Activated T-helper 1 cell treated with anti-CD3 and anti-CD28 coated beads, Interleukin-12 subunit alpha, Interleukin-12 subunit beta, Interleukin-2, Interleukin-4 antibody, amounts not matched to agents 30 ng/mL and 10 ng/mL and 1 ng/mL, durations not matched to agents 14 hours and 24 hours and 36 hours (primary cell): ENCODE measurements at regions of chr12 and their contacts with region 1.

Region 1: GRCh38 chr12:89040146-89040964 is 311.9 kb downstream of the DUSP6 start:
- DNase-seq: peak; percentile 79
- H3K4me3 Mint-ChIP-seq: peak overlapping the region; percentile 61
- H3K27ac Mint-ChIP-seq: peak overlapping the region; percentile 95
- H3K4me1 Mint-ChIP-seq: peaks cover 65% of the 10 kb centered on the region
- H3K27me3 Mint-ChIP-seq: no peaks in the 10 kb centered on the region

Region 2: GRCh38 chr12:88870000-88870737 is 170.2 kb before region 1 on chr12:
- intact Hi-C with region 1: no loop called
- DNase-seq: no peak
- H3K4me3 Mint-ChIP-seq: no peak overlapping the region
- H3K27ac Mint-ChIP-seq: no peak overlapping the region
- H3K4me1 Mint-ChIP-seq: no peaks in the 10 kb centered on the region
- H3K27me3 Mint-ChIP-seq: no peaks in the 10 kb centered on the region

Region 3: GRCh38 chr12:89051065-89051677 is 10.8 kb after region 1 on chr12:
- intact Hi-C with region 1: loop called (anchors 1 kb)
- DNase-seq: no peak
- H3K4me3 Mint-ChIP-seq: no peak overlapping the region
- H3K27ac Mint-ChIP-seq: no peak overlapping the region
- H3K4me1 Mint-ChIP-seq: peaks cover 31% of the 10 kb centered on the region
- H3K27me3 Mint-ChIP-seq: no peaks in the 10 kb centered on the region

Region 4: GRCh38 chr12:89179983-89180382 is 139.6 kb after region 1 on chr12:
- intact Hi-C with region 1: loop called (anchors 1 kb)
- DNase-seq: no peak
- H3K4me3 Mint-ChIP-seq: peak overlapping the region; percentile 48
- H3K27ac Mint-ChIP-seq: peak overlapping the region; percentile 95
- H3K4me1 Mint-ChIP-seq: peaks cover 62% of the 10 kb centered on the region
- H3K27me3 Mint-ChIP-seq: no peaks in the 10 kb centered on the region

Region 5: DNA sequence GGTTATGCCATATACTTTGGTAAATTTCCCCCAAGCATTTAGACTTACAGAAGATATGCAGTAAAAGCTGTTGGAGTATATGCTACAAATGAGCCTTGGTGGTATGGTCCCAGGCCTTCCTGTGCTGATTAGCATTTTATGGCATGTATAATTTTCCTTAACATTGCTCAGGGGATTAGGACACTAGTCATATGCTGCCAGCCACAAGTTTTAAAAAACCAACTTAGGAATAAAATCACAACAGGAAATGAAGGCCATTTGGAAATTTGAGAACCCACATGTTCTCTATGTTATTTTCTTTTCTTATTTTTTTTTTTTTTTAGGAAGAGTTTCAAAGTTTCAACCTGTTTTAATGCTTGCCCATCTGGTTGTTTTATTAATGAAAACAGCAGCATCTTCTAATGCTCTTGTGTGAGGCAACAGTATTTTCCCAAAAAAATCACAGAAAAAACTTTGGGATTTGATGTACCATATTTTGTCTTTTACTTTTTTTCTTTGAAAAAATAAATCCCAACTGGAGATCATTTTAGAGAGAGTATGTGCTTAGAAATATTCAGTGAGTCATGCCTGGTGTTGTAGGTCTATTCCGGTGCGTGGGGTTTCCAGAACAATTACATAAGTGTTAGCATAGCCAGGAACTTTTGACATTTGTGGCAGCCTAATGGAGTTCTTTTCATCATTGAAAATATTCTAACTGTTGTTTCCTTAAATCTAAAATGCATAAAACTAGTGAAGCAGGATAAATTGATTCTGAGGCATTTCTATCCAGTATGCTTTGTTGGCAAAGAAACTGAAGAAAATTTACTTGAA is 333.6 kb after region 1 on chr12:
- intact Hi-C with region 1: loop called (anchors 1 kb)
- DNase-seq: no peak
- H3K4me3 Mint-ChIP-seq: no peak overlapping the region
- H3K27ac Mint-ChIP-seq: no peak overlapping the region
- H3K4me1 Mint-ChIP-seq: peaks cover 50% of the 10 kb centered on the region
- H3K27me3 Mint-ChIP-seq: no peaks in the 10 kb centered on the region

Region 6: GRCh38 chr12:89524541-89525285 is 484.4 kb after region 1 on chr12 and contains the start of gene GALNT4:
- intact Hi-C with region 1: loop called (anchors 1 kb)
- DNase-seq: peak; percentile 74
- H3K4me3 Mint-ChIP-seq: peak within 1 kb of the TSS; percentile 92
- H3K27ac Mint-ChIP-seq: peak within 1 kb of the TSS; percentile 94
- H3K4me1 Mint-ChIP-seq: peaks cover 45% of the 10 kb centered on the region
- H3K27me3 Mint-ChIP-seq: no peaks in the 10 kb centered on the region
- total RNA-seq, gene GALNT4: 8.7 TPM in 2 replicates

Region 7: GRCh38 chr12:89949457-89950195 is 909.3 kb after region 1 on chr12:
- intact Hi-C with region 1: loop called (anchors 5 kb)
- DNase-seq: peak; percentile 51
- H3K4me3 Mint-ChIP-seq: no peak overlapping the region
- H3K27ac Mint-ChIP-seq: no peak overlapping the region
- H3K4me1 Mint-ChIP-seq: peaks cover 33% of the 10 kb centered on the region
- H3K27me3 Mint-ChIP-seq: no peaks in the 10 kb centered on the region